ENCODE measurements at regions of chr6 and their contacts with region 1.

Region 1: GRCh38 chr6:123802697-123803496 is 768 bp upstream of the NKAIN2 start:
- DNase-seq: peak; percentile 81
- H3K27ac ChIP-seq: peak overlapping the region; percentile 12; the same call in 1 of the 2 replicates
- CTCF ChIP-seq: peak; percentile 91

Region 2: DNA sequence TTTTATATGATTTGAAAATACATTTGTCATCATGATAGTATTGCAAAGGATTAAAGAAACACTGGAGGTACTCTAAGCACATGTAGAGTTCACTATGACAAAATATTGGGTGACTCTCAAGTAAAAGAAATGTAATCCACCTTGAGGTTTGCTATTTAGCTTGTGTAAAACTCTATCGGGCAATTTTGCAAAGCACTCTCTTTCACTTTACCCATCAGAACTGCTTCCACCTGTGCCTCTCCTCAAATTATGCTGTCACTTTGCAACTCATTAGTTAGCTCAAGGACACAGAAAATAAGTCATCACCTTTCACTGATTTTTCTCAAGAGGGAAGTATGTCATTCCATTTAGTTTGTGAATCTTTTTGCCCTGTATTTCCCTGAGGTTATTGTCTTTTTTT is 180.1 kb before region 1 on chr6:
- CTCF ChIA-PET with region 1: no interaction called
- POLR2A ChIA-PET with region 1: no interaction called
- DNase-seq: no peak
- H3K27ac ChIP-seq: no peak overlapping the region
- CTCF ChIP-seq: no peak

Region 3: DNA sequence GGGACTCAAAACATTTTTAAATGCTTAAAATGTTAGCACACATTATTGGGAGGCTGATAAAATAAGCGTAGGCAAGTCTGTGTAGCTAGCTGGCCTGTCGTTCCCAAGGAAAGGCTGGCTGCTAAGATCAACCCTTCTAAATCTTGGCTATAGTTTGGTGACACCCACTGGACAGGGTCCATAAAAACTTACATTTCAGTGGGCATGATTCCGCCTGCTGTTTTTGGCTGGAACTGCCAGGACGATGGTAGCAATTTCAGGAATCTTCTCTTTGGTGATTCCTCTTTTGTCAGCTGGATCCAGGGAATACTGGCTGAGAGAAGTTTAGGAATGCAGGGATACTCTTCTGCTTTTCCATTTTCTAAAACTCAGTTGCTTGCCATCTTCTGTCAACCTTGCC is 163.0 kb after region 1 on chr6:
- CTCF ChIA-PET with region 1: interaction called, 24 read pairs
- POLR2A ChIA-PET with region 1: no interaction called
- DNase-seq: peak; percentile 34
- H3K27ac ChIP-seq: no peak overlapping the region
- CTCF ChIP-seq: no peak; the same call in 1 of the 2 replicates

Measured in RWPE1 (cell line).